Caco-2 (cell line): ENCODE measurements at regions of chr16 and their contacts with region 1.

Region 1: DNA sequence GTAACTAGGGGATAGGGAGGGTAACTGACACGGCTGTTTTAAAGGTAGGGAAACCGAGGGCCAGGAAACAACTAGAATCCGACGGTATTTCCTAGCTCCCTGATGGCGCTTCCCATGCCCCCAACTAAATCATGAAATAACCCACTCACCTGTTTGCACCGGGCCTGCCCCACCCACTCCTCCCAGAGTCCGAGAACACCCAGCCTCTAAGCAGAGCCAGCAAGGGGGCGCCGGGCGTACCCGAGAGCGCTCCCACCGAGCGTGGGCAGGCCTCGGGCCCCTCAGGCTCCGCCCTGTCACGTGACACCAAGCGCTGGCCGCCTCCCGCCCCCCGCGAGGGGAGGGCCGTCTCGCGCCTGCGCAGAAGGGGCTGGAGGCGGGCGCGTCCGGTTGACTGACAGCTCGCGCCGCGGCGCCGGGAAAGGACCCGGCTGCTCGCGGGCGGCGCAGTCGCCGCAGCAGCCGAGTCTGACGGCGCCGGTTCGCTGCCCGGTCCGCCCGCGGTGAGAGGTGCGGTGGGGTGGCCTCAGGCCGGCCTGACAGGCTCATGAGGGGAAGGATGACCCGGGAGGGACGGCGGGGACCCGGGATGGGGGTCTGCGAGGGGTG is at the start of gene KIAA0513:
- DNase-seq: peak; percentile 95 to 99
- H3K4me3 ChIP-seq: peak within 1 kb of the TSS; percentile 89
- H3K4me3 Mint-ChIP-seq: peak within 1 kb of the TSS; percentile 92
- H3K27ac Mint-ChIP-seq: peak within 1 kb of the TSS; percentile 83
- H3K4me1 ChIP-seq: peaks cover 28% of the 10 kb centered on the region
- H3K4me1 Mint-ChIP-seq: peaks cover 26% of the 10 kb centered on the region
- H3K27me3 ChIP-seq: peaks cover 1% of the 10 kb centered on the region; the same call in 1 of the 2 replicates
- H3K27me3 Mint-ChIP-seq: no peaks in the 10 kb centered on the region
- CTCF ChIP-seq: peak in 1 of 2 experiments; percentile 65
- total RNA-seq, gene KIAA0513: 7.1 and 7.9 TPM in 2 replicates

Region 2: DNA sequence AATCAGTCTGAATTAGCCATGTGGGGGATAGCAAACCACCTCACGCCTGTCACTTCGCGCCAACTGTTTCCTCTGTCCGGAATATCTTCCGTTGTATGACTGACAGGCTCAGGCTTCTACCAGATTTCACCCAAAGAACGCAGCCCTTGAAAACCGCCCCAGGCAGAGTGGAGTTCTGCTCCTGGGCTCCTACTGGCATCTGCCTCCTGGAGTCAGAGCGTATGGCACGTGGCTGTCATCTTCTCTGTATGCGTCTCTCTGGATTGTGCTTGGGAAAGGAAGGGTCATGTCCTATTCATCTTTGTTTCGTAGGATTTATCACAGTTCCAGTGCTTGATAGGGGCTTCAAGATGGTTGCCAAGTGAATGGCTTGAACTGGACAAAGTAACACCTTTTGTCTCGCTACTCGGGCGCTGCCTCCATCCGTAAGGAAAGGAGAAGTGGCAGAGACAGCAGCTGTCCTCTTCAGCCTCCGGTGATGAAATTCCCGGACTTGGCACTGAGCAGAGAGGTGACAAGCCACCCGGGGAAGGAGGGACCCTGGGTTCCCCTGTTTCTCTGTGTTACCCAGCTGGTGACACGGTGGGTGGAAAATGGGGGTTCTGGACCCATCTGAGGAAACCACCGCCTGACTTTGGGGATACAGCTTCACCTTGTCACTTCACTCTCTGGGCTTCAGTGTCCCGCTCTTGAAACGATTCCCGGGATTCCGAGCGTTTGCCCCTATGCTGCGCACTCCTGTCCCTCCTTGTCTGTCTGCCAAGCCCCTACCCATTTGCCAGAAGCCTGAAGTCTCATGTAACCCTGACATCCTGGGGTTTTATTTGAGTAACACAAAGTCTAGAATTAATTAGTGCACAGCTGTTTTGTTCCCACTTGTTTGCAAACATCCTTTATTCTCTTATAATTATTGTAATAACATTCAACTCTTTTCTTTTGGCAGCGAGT is 14.0 kb after region 1 on chr16:
- CTCF ChIA-PET with region 1: no interaction called
- POLR2A ChIA-PET with region 1: no interaction called
- intact Hi-C with region 1: no loop called
- DNase-seq: no peak
- H3K4me3 ChIP-seq: no peak overlapping the region
- H3K4me3 Mint-ChIP-seq: no peak overlapping the region
- H3K27ac Mint-ChIP-seq: no peak overlapping the region
- H3K4me1 ChIP-seq: no peaks in the 10 kb centered on the region
- H3K4me1 Mint-ChIP-seq: peaks cover 6% of the 10 kb centered on the region
- H3K27me3 ChIP-seq: no peaks in the 10 kb centered on the region; the same call in 1 of the 2 replicates
- H3K27me3 Mint-ChIP-seq: no peaks in the 10 kb centered on the region
- CTCF ChIP-seq: no peak

Region 3: DNA sequence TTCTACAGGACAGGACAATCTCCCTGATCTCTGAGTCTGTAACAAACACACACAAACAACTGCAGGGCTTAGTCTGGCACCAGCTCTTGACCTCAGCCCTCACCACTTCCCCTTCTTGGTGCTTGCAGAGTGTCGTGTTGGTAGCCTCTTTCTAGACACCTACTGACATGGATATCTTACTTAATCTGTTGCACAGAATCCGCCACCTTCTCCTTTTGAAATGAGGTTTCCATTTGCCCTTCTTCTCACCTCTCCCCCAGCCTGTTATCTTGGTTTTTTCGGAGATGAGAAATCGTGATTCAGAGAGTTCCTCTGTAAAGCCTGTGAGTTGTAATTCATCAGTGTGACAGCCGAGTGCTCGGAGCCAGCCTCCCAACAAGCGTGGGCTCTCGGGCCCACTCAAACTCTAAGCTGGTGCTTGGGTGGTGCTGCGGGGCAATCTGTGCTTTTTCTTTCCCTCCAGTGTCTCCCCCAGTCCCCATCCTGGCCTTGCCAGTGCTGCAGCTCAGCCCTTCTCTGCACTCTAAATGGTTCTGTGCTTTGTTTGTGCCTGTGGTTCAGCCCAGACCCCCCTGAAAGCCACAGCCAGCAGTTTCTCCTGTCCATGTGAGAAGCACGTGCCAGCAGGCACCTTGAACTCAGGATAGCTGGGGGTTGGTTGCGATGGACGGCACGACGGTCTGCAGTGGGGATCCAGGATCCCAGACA is 28.2 kb after region 1 on chr16:
- CTCF ChIA-PET with region 1: interaction called, 10 read pairs
- POLR2A ChIA-PET with region 1: no interaction called
- intact Hi-C with region 1: no loop called
- DNase-seq: no peak
- H3K4me3 ChIP-seq: no peak overlapping the region
- H3K4me3 Mint-ChIP-seq: no peak overlapping the region
- H3K27ac Mint-ChIP-seq: no peak overlapping the region
- H3K4me1 ChIP-seq: 0 out of 2 replicates have a peak, but pooled peaks cover 4% of the 10 kb centered on the region
- H3K4me1 Mint-ChIP-seq: peaks cover 15% of the 10 kb centered on the region
- H3K27me3 ChIP-seq: no peaks in the 10 kb centered on the region
- H3K27me3 Mint-ChIP-seq: no peaks in the 10 kb centered on the region
- CTCF ChIP-seq: no peak